ENCODE measurements at regions of chr15 and their contacts with region 1.

Region 1: DNA sequence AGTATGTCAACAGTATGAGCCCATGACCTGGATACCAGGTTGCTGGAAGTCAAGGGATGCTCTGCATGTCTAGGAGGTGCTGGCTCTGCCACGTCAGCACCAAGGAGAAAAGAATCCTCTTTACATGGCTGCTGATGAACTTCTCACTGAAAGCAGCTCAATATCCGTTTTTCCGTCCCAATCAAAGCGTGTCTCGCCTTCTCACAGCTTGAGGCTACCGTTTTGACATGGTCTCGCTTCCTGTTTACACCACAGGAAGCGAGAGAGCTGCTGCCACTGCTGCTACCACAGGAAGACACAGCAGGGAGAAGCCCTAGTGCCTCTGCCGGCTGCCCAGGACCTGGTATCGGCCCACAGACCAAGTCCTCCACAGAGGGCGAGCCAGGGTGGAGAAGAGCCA is 27.3 kb downstream of the STARD5 start:
- DNase-seq: peak; percentile 86
- ATAC-seq: peak; percentile 54
- H3K4me3 Mint-ChIP-seq: peak overlapping the region; percentile 94
- H3K27ac Mint-ChIP-seq: peak overlapping the region; percentile 98
- H3K4me1 Mint-ChIP-seq: peaks cover 62% of the 10 kb centered on the region
- H3K27me3 Mint-ChIP-seq: no peaks in the 10 kb centered on the region

Region 2: GRCh38 chr15:80953936-80954778 is 342.5 kb before region 1 on chr15:
- CTCF ChIA-PET with region 1: no interaction called
- POLR2A ChIA-PET with region 1: no interaction called
- intact Hi-C with region 1: loop called in 1 of 2 experiments (anchors 1 kb)
- DNase-seq: no peak
- ATAC-seq: no peak
- H3K4me3 Mint-ChIP-seq: no peak overlapping the region
- H3K27ac Mint-ChIP-seq: no peak overlapping the region
- H3K4me1 Mint-ChIP-seq: peaks cover 24% of the 10 kb centered on the region
- H3K27me3 Mint-ChIP-seq: no peaks in the 10 kb centered on the region

Region 3: GRCh38 chr15:81023483-81024264 is 273.0 kb before region 1 on chr15:
- CTCF ChIA-PET with region 1: no interaction called
- POLR2A ChIA-PET with region 1: interaction called, 3 read pairs
- intact Hi-C with region 1: loop called in 1 of 2 experiments (anchors 2 kb)
- DNase-seq: peak; percentile 45
- ATAC-seq: peak; percentile 85
- H3K4me3 Mint-ChIP-seq: peak overlapping the region; percentile 32
- H3K27ac Mint-ChIP-seq: peak overlapping the region; percentile 87
- H3K4me1 Mint-ChIP-seq: peaks cover 36% of the 10 kb centered on the region
- H3K27me3 Mint-ChIP-seq: peaks cover 2% of the 10 kb centered on the region

Region 4: DNA sequence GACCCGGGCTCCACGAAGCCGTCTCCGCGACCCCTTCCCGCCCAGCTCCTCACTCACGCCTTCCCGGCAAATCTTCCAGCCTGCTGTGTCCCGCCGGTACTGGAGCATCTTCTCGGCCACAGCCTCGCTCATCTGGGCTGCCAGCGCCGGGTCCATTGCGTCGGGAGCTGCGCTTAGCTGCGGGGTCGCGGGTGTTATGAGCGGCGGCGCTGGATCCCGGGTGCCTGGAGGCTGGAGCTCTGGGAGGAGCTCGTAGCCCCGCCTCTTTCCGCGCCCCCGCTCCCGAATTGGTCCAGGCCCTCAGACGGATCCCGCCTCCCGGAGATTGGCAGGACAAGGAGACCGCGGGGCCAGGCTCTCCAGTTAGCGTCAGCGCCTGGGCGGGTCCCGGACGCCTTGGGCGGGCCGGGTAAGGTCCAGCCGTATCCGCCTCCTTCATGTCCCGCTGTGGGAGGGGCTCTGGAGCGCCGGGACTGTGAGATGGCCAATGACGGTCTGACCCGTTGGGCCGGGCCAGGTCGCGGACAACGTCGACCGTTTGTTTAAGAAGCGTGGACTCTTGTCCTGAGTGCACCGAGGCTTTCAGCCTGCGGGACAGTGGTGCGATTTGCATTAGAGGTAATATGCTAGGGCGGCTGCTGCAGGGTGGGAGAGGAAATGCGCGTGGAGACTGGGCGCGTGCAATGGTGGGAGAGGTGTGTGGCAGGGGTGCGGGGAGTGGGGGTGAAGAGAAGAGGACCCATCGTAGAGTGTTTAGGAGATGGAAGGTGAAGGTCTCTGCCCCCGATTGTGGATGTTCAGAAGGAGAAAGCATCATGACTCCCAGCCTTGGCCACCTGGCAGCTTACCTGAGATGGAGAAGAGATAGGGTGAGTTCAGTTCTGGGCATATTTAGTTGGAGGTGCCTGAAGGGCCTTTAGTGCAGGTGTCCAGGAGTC is 27.5 kb after region 1 on chr15 and contains the start of gene STARD5:
- CTCF ChIA-PET with region 1: interaction called, 6 read pairs
- POLR2A ChIA-PET with region 1: interaction called, 23 read pairs
- intact Hi-C with region 1: loop called (anchors 1 kb)
- DNase-seq: peak; percentile 98
- ATAC-seq: peak; percentile 99
- H3K4me3 Mint-ChIP-seq: peak within 1 kb of the TSS; percentile 95
- H3K27ac Mint-ChIP-seq: peak within 1 kb of the TSS; percentile 90
- H3K4me1 Mint-ChIP-seq: peaks cover 27% of the 10 kb centered on the region
- H3K27me3 Mint-ChIP-seq: no peaks in the 10 kb centered on the region
- total RNA-seq, gene STARD5: 8.9 to 9.2 TPM

Region 5: GRCh38 chr15:82540055-82540983 is 1243.6 kb after region 1 on chr15 and contains the start of gene RPS17:
- CTCF ChIA-PET with region 1: no interaction called
- POLR2A ChIA-PET with region 1: no interaction called
- intact Hi-C with region 1: loop called (anchors 2 to 10 kb)
- DNase-seq: peak; percentile 99
- ATAC-seq: peak; percentile 93
- H3K4me3 Mint-ChIP-seq: peak within 1 kb of the TSS; percentile 96
- H3K27ac Mint-ChIP-seq: peak within 1 kb of the TSS; percentile 96
- H3K4me1 Mint-ChIP-seq: peaks cover 23% of the 10 kb centered on the region
- H3K27me3 Mint-ChIP-seq: no peaks in the 10 kb centered on the region
- total RNA-seq, gene RPS17: 2,882 to 3,294 TPM